GM23248 (cell line): ENCODE measurements at regions of chr13 and their contacts with region 1.

Region 1: GRCh38 chr13:58729361-58729760 is 1097.8 kb downstream of the PCDH17 start:
- DNase-seq: no peak
- H3K4me3 ChIP-seq: no peak overlapping the region
- H3K27ac ChIP-seq: no peak overlapping the region
- H3K4me1 ChIP-seq: no peaks in the 10 kb centered on the region
- H3K27me3 ChIP-seq: no peaks in the 10 kb centered on the region

Region 2: DNA sequence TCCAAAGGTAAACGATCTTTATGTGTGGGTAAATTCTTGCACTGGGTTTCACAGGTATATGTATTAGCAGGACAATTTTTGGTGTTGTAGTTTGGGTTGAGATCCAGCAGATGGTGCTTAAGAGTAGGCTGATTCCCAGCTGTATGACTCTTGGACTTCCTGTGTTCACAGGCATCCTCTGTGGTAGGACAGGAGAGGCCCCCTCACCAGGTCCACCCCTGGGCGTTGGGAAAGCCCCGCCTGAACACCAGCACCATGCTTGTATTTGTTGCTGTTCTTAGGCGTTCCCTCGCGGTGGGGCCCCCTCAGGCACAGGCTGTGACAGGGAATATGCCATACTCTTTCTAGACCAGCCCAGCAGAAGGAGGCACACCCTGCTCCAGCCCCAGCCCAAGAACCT is 1147.3 kb before region 1 on chr13:
- in situ Hi-C with region 1: no loop called
- DNase-seq: no peak
- H3K4me3 ChIP-seq: no peak overlapping the region
- H3K27ac ChIP-seq: no peak overlapping the region
- H3K4me1 ChIP-seq: no peaks in the 10 kb centered on the region
- H3K27me3 ChIP-seq: no peaks in the 10 kb centered on the region

Region 3: GRCh38 chr13:58680115-58680514 is 49.2 kb before region 1 on chr13:
- in situ Hi-C with region 1: loop called (anchors 10 kb)
- DNase-seq: no peak
- H3K4me3 ChIP-seq: no peak overlapping the region
- H3K27ac ChIP-seq: no peak overlapping the region
- H3K4me1 ChIP-seq: no peaks in the 10 kb centered on the region
- H3K27me3 ChIP-seq: no peaks in the 10 kb centered on the region